ENCODE measurements at regions of chr1 and their contacts with region 1.

Region 1: DNA sequence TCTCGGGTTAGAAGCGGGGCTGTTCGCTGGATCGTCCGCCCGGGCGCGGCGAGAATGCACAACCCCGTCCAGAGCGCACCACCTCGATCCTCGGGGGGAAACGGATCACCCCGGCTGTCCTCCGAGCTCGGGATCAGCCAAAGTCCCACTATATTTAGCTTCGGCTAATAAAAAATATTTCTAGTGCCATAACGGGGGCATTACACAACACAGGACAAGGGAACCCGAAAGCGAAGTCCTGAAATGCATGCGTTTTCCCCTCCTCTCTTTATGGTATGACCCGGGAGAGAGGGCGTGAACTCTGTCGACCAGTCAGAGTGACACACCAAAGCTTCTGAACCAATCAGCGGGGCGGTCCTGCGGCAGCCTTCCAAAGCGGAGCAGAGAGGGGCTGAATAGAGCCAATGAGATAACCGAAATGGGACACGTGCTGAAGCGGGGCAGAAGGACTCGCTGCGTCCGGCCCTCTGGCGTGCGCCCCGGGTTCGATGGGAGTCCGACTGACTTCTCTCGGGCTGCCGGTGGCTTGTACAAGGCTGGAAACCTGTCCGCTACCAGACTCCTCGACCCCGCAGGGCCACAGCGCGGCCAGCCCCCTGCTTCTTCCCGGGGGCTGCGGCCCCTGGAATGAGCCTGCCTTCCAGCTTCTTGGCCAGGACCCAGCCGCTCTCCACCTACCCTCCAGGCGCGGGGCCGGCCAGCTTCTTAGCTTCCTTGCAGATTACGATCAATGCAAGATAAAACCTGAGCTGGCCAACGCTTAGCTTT is at the start of gene ALDH4A1:
- DNase-seq: peak; percentile 96
- ATAC-seq: peak; percentile 99
- H3K4me3 Mint-ChIP-seq: peak within 1 kb of the TSS; percentile 86
- H3K27ac Mint-ChIP-seq: peak within 1 kb of the TSS; percentile 98
- H3K4me1 Mint-ChIP-seq: peaks cover 20% of the 10 kb centered on the region
- H3K27me3 Mint-ChIP-seq: no peaks in the 10 kb centered on the region
- total RNA-seq, gene ALDH4A1: 4.4 to 5.8 TPM

Region 2: GRCh38 chr1:18926315-18927081 is 23.8 kb after region 1 on chr1:
- CTCF ChIA-PET with region 1: interaction called, 26 read pairs
- POLR2A ChIA-PET with region 1: interaction called, 5 read pairs
- intact Hi-C with region 1: loop called in 1 of 2 experiments (anchors 1 kb)
- DNase-seq: peak; percentile 94
- ATAC-seq: peak; percentile 89
- H3K4me3 Mint-ChIP-seq: peak overlapping the region; percentile 69
- H3K27ac Mint-ChIP-seq: peak overlapping the region; percentile 99
- H3K4me1 Mint-ChIP-seq: peaks cover 92% of the 10 kb centered on the region
- H3K27me3 Mint-ChIP-seq: no peaks in the 10 kb centered on the region

Region 3: DNA sequence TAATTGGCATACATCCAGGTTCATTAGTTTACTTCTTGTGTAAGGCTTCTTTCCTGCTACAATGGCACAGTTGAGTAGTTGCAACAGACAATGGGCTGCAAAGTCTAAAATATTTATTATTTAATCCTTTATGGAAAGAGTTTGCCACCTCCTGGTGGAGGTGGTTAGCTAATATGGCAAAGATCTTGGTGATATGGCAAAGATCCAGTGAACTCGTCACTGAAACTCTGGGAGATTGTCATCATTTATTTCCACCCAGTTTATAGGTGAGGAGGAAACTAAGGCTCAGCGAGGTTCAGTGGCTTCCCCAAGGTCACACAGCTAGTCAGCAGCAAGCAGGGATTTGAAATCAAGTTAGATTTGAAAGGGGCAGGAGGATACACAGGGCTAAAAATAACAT is 69.8 kb after region 1 on chr1:
- CTCF ChIA-PET with region 1: interaction called, 11 read pairs
- POLR2A ChIA-PET with region 1: no interaction called
- intact Hi-C with region 1: loop called (anchors 1 kb)
- DNase-seq: no peak
- ATAC-seq: peak; percentile 42
- H3K4me3 Mint-ChIP-seq: no peak overlapping the region
- H3K27ac Mint-ChIP-seq: no peak overlapping the region
- H3K4me1 Mint-ChIP-seq: peaks cover 8% of the 10 kb centered on the region
- H3K27me3 Mint-ChIP-seq: peaks cover 2% of the 10 kb centered on the region

Region 4: DNA sequence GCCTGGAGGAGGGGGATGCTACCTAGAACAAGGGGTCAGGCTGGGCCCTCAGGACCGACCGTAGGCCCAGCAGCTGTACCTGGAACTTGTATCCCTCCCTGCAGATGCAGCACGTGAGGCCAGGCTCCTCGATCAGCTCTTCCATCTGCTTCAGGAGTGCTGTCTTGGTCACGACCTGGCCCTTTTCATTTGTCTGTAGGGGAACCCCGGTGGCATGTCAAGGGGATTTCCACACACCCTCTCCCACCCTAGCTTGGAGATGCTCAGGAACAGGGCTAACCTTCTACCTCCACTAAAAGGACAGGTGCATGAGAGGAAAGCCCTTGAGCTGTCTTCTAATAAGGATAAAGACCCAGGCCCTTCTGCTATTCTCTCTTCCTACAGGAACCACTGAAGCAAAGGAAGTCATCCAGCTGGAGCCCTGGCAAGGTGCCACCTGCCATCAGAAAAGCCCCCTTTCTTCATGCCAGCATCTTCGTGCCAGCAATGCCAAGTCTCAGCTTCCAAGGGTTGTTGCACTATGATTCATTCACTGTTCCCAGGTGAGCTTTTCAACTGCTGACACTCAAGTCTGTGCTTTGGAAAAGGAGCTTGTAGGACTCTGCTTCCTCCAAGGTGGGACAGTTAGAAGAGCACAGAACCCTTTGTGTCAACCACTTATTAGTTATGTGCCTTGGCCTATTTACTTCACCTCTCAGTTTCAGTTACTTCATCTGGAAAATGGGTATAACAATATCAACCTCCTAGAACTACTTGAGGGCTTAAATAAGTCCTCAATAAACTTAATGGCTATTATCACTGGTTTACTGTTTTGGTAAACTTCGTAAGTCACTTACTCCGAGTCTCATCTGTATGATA is 185.3 kb after region 1 on chr1:
- CTCF ChIA-PET with region 1: interaction called, 15 read pairs
- POLR2A ChIA-PET with region 1: no interaction called
- intact Hi-C with region 1: loop called in 1 of 2 experiments (anchors 5 kb)
- DNase-seq: peak; percentile 47
- ATAC-seq: peak; percentile 61
- H3K4me3 Mint-ChIP-seq: no peak overlapping the region
- H3K27ac Mint-ChIP-seq: peak overlapping the region; percentile 65
- H3K4me1 Mint-ChIP-seq: peaks cover 29% of the 10 kb centered on the region
- H3K27me3 Mint-ChIP-seq: no peaks in the 10 kb centered on the region

Region 5: GRCh38 chr1:19209990-19210771 is 307.5 kb after region 1 on chr1 and contains the start of gene UBR4:
- CTCF ChIA-PET with region 1: no interaction called
- POLR2A ChIA-PET with region 1: no interaction called
- intact Hi-C with region 1: loop called in 1 of 2 experiments (anchors 1 kb)
- DNase-seq: peak; percentile 99
- ATAC-seq: peak; percentile 90
- H3K4me3 Mint-ChIP-seq: peak within 1 kb of the TSS; percentile 87
- H3K27ac Mint-ChIP-seq: peak within 1 kb of the TSS; percentile 97
- H3K4me1 Mint-ChIP-seq: peaks cover 68% of the 10 kb centered on the region
- H3K27me3 Mint-ChIP-seq: no peaks in the 10 kb centered on the region
- total RNA-seq, gene UBR4: 117 to 147 TPM

Region 6: GRCh38 chr1:19596714-19597495 is 694.2 kb after region 1 on chr1:
- CTCF ChIA-PET with region 1: no interaction called
- POLR2A ChIA-PET with region 1: no interaction called
- intact Hi-C with region 1: loop called in 1 of 2 experiments (anchors 5 kb)
- DNase-seq: peak; percentile 98
- ATAC-seq: peak; percentile 86
- H3K4me3 Mint-ChIP-seq: peak overlapping the region; percentile 100
- H3K27ac Mint-ChIP-seq: peak overlapping the region; percentile 99
- H3K4me1 Mint-ChIP-seq: peaks cover 44% of the 10 kb centered on the region
- H3K27me3 Mint-ChIP-seq: no peaks in the 10 kb centered on the region

Measured in activated CD4-positive, alpha-beta T cell treated with anti-CD3 and anti-CD28 coated beads for 36 hours (primary cell).